Calu3 (cell line): ENCODE measurements at regions of chr5 and their contacts with region 1.

Region 1: DNA sequence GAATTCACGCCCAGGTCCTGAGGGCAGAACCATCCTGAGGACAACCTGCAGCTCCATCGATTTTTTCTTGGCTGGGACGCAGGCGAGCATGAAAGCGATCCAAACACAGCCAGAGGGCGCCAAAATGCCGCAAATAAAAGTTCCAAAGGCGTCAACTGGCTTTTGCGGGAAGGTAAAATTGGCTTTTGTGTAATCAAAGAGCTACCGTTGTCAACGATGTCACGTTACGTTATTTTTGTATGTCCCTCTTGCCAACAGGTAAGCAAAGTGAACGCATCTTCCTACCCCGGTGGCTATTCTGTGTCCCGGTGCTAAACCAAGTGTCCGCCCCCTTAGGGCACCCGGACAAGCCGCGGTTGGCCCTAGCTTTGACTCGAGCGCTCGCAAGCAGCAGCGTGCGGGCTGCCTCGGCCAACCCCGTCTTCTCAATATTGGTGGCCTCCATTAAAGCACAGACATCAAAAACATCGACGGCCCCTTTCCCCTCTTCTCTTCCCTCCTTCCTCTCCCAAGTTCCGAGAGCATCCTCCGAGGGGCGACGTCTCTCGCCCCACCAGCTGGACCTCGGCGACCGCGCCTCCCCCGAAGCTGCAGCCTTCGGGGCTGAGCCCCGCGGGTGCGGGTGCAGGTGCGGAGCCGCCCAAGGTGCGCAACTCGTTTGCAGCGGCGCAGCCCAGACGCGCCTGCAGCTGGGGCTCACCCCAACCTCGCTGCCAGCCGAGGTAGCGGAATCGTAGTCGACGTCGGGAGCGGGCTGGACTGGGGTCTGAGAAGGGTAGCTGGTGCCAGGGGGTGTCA is 1.1 kb upstream of the BASP1 start:
- DNase-seq: peak; percentile 75
- H3K4me3 Mint-ChIP-seq: no peak overlapping the region
- H3K27ac Mint-ChIP-seq: no peak overlapping the region
- H3K4me1 Mint-ChIP-seq: no peaks in the 10 kb centered on the region
- H3K27me3 Mint-ChIP-seq: peaks cover 28% of the 10 kb centered on the region
- CTCF ChIP-seq: peak; percentile 68

Region 2: GRCh38 chr5:18281682-18282557 is 1065.5 kb after region 1 on chr5:
- CTCF ChIA-PET with region 1: interaction called, 13 read pairs
- intact Hi-C with region 1: loop called (anchors 1 kb)
- DNase-seq: no peak
- H3K4me3 Mint-ChIP-seq: no peak overlapping the region
- H3K27ac Mint-ChIP-seq: no peak overlapping the region
- H3K4me1 Mint-ChIP-seq: no peaks in the 10 kb centered on the region
- H3K27me3 Mint-ChIP-seq: no peaks in the 10 kb centered on the region
- CTCF ChIP-seq: no peak

Region 3: DNA sequence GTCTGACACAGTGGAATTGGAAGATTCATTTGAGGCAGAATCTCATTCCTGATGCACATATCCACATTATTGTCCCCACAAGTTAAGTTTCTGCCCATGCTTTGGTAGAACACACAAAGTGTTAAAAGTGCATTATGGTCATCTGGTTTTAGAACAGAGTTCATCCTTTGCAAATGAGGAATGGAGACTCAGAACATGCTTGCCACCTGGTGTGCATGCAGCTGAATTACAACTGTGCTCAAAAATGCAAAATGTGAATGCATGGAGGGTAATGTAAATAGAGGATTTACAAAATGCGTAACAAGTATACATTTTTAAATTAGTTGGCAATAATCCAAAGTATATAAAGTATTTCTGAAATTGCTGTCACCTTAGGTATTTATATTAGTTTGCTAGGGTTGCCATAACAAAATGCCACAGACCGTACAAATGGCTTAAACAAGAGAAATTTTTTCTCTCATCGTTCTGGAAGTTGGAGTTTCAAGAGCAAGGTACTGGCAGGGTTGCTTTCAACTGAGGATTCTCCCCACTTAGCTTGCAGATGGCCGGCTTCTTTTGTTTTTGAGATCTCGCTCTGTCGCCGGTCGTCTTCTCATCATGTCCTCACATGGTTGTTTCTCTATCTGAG is 1089.0 kb after region 1 on chr5:
- CTCF ChIA-PET with region 1: interaction called, 11 read pairs
- intact Hi-C with region 1: loop called (anchors 1 kb)
- DNase-seq: peak; percentile 24
- H3K4me3 Mint-ChIP-seq: no peak overlapping the region
- H3K27ac Mint-ChIP-seq: no peak overlapping the region
- H3K4me1 Mint-ChIP-seq: no peaks in the 10 kb centered on the region
- H3K27me3 Mint-ChIP-seq: no peaks in the 10 kb centered on the region
- CTCF ChIP-seq: peak; percentile 22

Region 4: GRCh38 chr5:18314192-18314778 is 1097.9 kb after region 1 on chr5:
- CTCF ChIA-PET with region 1: no interaction called
- intact Hi-C with region 1: loop called (anchors 2 kb)
- DNase-seq: peak; percentile 1
- H3K4me3 Mint-ChIP-seq: no peak overlapping the region
- H3K27ac Mint-ChIP-seq: no peak overlapping the region
- H3K4me1 Mint-ChIP-seq: no peaks in the 10 kb centered on the region
- H3K27me3 Mint-ChIP-seq: no peaks in the 10 kb centered on the region
- CTCF ChIP-seq: peak; percentile 46